ENCODE measurements at regions of chr5 and their contacts with region 1.

Region 1: DNA sequence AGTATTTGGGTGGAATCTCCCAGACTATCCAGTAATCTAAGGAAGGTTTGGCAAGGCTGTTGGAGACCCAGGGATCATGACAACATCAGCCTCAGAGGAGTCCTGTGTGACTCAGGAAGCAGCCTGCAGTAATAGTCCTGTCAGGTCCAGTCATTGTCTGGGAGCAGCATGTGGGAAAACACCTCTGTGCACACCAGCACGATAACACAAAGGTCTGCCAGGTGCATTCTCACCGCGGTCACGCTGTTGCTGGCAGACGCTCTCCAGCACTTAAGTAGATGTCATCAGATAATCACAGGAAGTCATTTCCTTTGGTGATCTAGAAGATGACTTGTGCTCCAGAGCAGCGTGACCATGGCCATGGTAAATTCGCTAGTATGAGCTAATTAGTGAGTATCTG is 99.2 kb upstream of the IQGAP2 start:
- DNase-seq: peak; percentile 16 to 75 (median 39)
- H3K4me3 ChIP-seq: peak overlapping the region in 1 of 2 donors; percentile 1
- H3K4me3 Mint-ChIP-seq: peak overlapping the region in 5 of 8 donors; percentile 0 to 83 (median 21)
- H3K27ac ChIP-seq: no peak overlapping the region
- H3K27ac Mint-ChIP-seq: peak overlapping the region; percentile 7 to 83 (median 75)
- H3K4me1 ChIP-seq: peaks cover 28% of the 10 kb centered on the region
- H3K4me1 Mint-ChIP-seq: peaks cover 26 to 46% (median 37%) of the 10 kb centered on the region in 4 donors
- H3K27me3 ChIP-seq: no peaks in the 10 kb centered on the region
- H3K27me3 Mint-ChIP-seq: no peaks in the 10 kb centered on the region

Region 2: DNA sequence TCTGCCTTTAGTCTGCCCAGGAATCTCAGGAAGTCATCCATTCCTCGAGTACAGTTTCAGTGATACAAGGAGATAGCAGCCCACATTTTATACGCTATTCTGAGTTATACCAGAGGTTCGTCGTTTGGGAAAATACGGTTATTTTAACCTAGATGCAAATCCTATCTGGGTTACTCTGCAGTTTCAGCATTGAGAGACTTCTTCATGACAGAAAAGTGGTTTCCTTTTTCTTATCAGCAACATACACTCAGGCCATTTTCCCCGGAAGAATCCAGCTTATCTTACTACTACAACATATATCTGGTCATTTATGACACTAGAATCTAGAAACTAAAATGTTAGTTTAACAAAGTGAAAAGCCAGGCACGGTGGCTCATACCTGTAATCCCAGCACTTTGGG is 15.8 kb after region 1 on chr5:
- CTCF ChIA-PET with region 1: interaction called, 40 read pairs
- POLR2A ChIA-PET with region 1: interaction called, 25 read pairs
- intact Hi-C with region 1: no loop called
- DNase-seq: no peak
- H3K4me3 ChIP-seq: no peak overlapping the region
- H3K4me3 Mint-ChIP-seq: no peak overlapping the region
- H3K27ac ChIP-seq: no peak overlapping the region
- H3K27ac Mint-ChIP-seq: peak overlapping the region in 2 of 7 donors; percentile 8 to 47
- H3K4me1 ChIP-seq: peaks cover 4% of the 10 kb centered on the region
- H3K4me1 Mint-ChIP-seq: peaks cover 5 to 26% (median 14%) of the 10 kb centered on the region in 4 donors
- H3K27me3 ChIP-seq: no peaks in the 10 kb centered on the region
- H3K27me3 Mint-ChIP-seq: no peaks in the 10 kb centered on the region

Region 3: GRCh38 chr5:76942581-76942980 is 638.7 kb after region 1 on chr5:
- CTCF ChIA-PET with region 1: no interaction called
- POLR2A ChIA-PET with region 1: no interaction called
- intact Hi-C with region 1: no loop called
- DNase-seq: no peak
- H3K4me3 ChIP-seq: no peak overlapping the region
- H3K4me3 Mint-ChIP-seq: no peak overlapping the region
- H3K27ac ChIP-seq: no peak overlapping the region
- H3K27ac Mint-ChIP-seq: no peak overlapping the region
- H3K4me1 ChIP-seq: no peaks in the 10 kb centered on the region
- H3K4me1 Mint-ChIP-seq: no peaks in the 10 kb centered on the region
- H3K27me3 ChIP-seq: no peaks in the 10 kb centered on the region
- H3K27me3 Mint-ChIP-seq: peaks cover 8 to 11% of the 10 kb centered on the region in 2 donors